ENCODE measurements at regions of chr9 and their contacts with region 1.

Region 1: DNA sequence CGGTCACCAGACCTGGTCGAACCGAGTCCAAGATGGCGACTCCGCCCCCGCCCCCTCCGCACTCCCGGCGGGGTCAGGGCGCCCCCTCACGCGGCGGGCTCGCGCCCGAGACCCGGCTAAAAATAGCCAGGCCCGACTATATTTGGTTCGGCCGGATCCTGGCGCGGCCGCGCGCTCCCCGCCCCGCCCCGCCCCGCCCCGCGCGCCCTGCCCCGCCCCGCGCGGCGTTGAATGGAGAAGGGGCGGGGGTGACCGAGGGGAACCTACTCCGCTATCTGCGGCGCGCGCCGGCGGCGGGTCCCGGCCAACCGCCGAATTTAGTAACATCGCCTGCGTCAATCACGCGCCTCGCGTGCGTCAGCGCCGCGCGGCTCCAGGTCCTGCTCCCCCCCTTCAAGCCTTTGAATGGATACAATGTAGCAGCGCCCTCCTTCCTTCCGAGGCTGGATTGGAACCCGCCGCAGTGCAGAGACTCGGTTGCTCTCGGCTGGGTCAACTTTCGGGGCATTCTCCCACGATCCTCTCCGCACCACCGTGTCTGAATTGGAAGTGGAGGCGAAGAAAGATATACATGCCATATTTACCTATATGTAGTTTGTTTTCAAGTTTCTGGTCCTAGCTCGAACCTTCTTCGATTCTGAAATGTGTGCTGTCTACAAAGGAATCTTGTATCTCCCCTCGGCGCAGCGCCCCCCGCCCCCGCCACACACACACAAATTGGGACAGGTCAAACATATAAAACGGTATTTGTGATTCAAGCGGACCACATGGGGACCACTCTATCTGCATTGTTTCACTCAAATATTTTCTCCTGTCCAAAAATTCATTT is 1.6 kb upstream of the NR4A3 start:
- DNase-seq: peak; percentile 81
- ATAC-seq: peak; percentile 52
- H3K4me3 ChIP-seq: peak overlapping the region; percentile 78 to 90 (median 89)
- H3K27ac ChIP-seq: peak overlapping the region; percentile 87
- H3K4me1 ChIP-seq: peaks cover 46% of the 10 kb centered on the region
- H3K27me3 ChIP-seq: peaks cover 4 to 28% of the 10 kb centered on the region in 2 experiments; a peak in 4 of 5 replicates
- CTCF ChIP-seq: peak; percentile 31
- EP300 ChIP-seq: no peak
- POLR2A ChIP-seq: no peak
- RAD21 ChIP-seq: no peak

Region 2: DNA sequence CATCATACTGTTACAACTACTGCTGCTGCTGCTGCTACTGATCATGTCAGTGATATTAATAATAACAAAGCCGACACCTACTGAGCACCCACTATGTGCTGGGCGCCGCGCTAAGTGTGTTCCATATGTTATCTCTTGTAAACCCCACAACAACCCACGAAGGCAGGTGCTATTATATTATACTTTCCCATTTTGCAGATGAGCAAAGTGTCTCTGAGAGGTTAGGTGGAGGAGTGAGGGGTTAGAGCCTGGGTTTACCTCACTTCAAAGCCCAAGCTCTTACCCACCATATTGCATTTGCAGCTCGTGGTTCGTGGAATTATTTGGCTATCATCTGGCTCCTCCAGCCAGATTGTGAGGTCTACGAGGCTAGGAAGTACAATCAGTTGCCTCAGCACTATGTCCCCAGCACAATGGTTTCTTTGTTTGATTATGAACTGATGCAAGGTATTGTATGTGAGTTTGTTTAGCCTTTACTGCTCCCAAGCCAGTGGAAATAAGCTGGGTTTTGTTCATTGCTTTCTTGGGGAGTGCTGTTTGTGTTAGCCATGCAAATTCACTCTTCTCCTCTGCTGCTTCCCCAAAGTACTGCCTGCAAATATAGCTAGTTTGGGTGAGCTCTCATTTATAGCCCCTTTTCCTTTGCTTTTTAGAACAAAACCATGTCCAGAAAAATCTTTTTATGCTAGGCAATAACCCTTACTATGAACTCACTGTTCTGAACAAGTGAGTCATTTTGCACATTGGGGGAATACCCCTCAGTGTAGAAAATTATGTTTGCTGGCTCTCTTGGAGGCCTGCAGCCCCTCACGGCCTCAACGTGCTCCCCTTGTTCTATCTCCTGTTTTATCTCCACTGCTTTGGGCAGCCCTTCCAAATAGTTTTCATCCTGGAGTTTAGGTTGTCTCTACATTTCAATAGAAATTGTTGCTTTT is 646.2 kb before region 1 on chr9:
- CTCF ChIA-PET with region 1: no interaction called
- POLR2A ChIA-PET with region 1: interaction called, 4 read pairs
- in situ Hi-C with region 1: no loop called
- intact Hi-C with region 1: loop called (anchors 5 kb)
- DNase-seq: peak; percentile 87
- ATAC-seq: peak; percentile 76
- H3K4me3 ChIP-seq: peak overlapping the region in 2 of 3 experiments; percentile 9 to 24; a peak in 2 of 6 replicates
- H3K27ac ChIP-seq: peak overlapping the region; percentile 22
- H3K4me1 ChIP-seq: peaks cover 85% of the 10 kb centered on the region
- H3K27me3 ChIP-seq: peaks cover 2 to 6% of the 10 kb centered on the region in 2 experiments; a peak in 2 of 5 replicates
- CTCF ChIP-seq: no peak
- EP300 ChIP-seq: 0 out of 4 replicates have a peak, but pooled peaks of 1 of the 2 experiments have one; percentile 31
- POLR2A ChIP-seq: no peak
- RAD21 ChIP-seq: no peak

Region 3: DNA sequence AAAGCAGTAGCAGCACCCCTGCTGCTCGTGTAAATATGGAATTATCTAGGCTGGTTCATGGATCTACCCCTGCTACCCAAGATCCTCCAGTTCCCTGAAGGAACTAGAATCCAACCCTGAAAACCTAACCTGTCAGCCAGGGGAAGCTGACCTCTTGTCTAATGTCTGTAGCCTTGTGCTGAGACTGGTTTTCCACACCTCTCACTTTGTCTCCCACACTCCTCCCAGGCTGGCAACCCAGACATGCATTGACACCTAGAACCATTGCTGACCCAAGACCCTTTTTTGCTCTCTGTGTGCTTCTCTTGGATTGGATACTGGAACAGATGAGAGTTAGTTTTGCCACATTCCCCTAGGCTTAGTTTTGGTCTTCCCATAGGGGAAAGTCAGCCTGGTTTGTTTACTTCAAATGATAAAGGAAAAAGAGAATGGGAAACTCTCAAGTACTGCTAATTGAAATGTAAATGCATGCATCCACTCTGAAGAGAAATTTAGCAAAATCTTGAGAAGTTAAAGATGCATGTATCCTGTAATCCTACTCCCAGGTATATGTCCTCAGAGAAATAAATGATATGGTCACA is 35.0 kb before region 1 on chr9:
- CTCF ChIA-PET with region 1: no interaction called
- POLR2A ChIA-PET with region 1: no interaction called
- in situ Hi-C with region 1: no loop called
- intact Hi-C with region 1: loop called (anchors 1 kb)
- DNase-seq: no peak
- ATAC-seq: no peak
- H3K4me3 ChIP-seq: no peak overlapping the region
- H3K27ac ChIP-seq: no peak overlapping the region
- H3K4me1 ChIP-seq: no peaks in the 10 kb centered on the region
- H3K27me3 ChIP-seq: no peaks in the 10 kb centered on the region
- CTCF ChIP-seq: no peak
- EP300 ChIP-seq: no peak
- POLR2A ChIP-seq: no peak
- RAD21 ChIP-seq: no peak

Region 4: DNA sequence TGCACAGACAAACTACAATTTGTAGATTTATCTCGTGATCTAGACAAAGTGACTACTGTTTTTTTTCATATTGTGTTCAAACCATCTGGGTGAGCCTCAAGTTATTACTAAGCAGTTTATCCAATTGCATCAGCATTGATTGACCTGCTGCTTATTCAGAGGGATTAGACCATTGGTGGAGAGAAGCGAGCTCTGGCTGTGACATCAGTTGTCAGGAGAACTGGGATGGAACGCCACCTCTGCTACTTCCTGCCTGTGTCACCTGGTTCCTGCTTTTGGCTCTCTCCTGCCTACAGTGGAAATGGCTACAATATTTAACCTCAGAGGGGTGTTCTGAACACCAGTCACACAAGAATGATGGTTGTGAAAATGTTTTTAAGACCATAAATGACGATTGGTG is 13.7 kb after region 1 on chr9:
- CTCF ChIA-PET with region 1: no interaction called
- POLR2A ChIA-PET with region 1: no interaction called
- in situ Hi-C with region 1: no loop called
- intact Hi-C with region 1: no loop called
- DNase-seq: no peak
- ATAC-seq: no peak
- H3K4me3 ChIP-seq: no peak overlapping the region
- H3K27ac ChIP-seq: no peak overlapping the region
- H3K4me1 ChIP-seq: no peaks in the 10 kb centered on the region
- H3K27me3 ChIP-seq: peaks cover 0 to 13% of the 10 kb centered on the region in 2 experiments; a peak in 1 of 5 replicates
- CTCF ChIP-seq: no peak
- EP300 ChIP-seq: no peak
- POLR2A ChIP-seq: no peak
- RAD21 ChIP-seq: no peak

Region 5: GRCh38 chr9:99906403-99907207 is 86.5 kb after region 1 on chr9 and contains the start of gene STX17:
- CTCF ChIA-PET with region 1: no interaction called
- POLR2A ChIA-PET with region 1: interaction called, 6 read pairs
- in situ Hi-C with region 1: loop called (anchors 5 kb)
- intact Hi-C with region 1: loop called (anchors 2 kb)
- DNase-seq: peak; percentile 61
- ATAC-seq: peak; percentile 92
- H3K4me3 ChIP-seq: peak within 1 kb of the TSS; percentile 80 to 96 (median 83)
- H3K27ac ChIP-seq: peak within 1 kb of the TSS; percentile 92
- H3K4me1 ChIP-seq: peaks cover 21% of the 10 kb centered on the region
- H3K27me3 ChIP-seq: no peaks in the 10 kb centered on the region; a peak in 1 of 5 replicates
- CTCF ChIP-seq: peak; percentile 22
- EP300 ChIP-seq: no peak
- POLR2A ChIP-seq: peak; percentile 75 to 80; a peak in 3 of 4 replicates
- RAD21 ChIP-seq: peak; percentile 10; the same call in 1 of the 2 replicates
- total RNA-seq, gene STX17: 25.7 and 28.9 TPM in 2 replicates

Region 6: DNA sequence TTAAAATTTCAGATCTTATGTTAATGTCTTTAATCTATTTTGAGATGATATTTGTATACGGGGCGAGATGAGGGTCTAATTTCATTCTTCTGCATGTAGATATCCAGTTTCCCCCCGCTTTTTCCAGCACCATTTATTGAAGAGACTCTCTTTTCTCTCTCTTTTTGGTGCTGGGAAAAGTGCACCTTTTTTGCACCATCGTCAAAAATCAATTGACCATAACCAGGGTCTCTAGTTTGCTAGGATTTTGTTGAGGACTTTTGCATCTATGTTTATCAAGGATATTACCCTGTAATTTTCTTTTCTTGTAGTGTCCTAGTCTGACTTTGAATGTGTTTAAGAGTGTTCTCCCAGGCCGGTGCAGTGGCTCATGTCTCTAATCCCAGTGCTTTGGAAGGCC is 179.7 kb after region 1 on chr9:
- CTCF ChIA-PET with region 1: no interaction called
- POLR2A ChIA-PET with region 1: no interaction called
- in situ Hi-C with region 1: loop called (anchors 10 kb)
- intact Hi-C with region 1: no loop called
- DNase-seq: no peak
- ATAC-seq: no peak
- H3K4me3 ChIP-seq: no peak overlapping the region
- H3K27ac ChIP-seq: no peak overlapping the region
- H3K4me1 ChIP-seq: no peaks in the 10 kb centered on the region
- H3K27me3 ChIP-seq: no peaks in the 10 kb centered on the region
- CTCF ChIP-seq: no peak
- EP300 ChIP-seq: no peak
- POLR2A ChIP-seq: no peak
- RAD21 ChIP-seq: no peak

Region 7: GRCh38 chr9:100098887-100099721 is 279.0 kb after region 1 on chr9 and contains the starts of genes ERP44 and INVS:
- CTCF ChIA-PET with region 1: no interaction called
- POLR2A ChIA-PET with region 1: no interaction called
- in situ Hi-C with region 1: no loop called
- intact Hi-C with region 1: loop called (anchors 1 kb)
- DNase-seq: peak; percentile 98
- ATAC-seq: peak; percentile 96
- H3K4me3 ChIP-seq: peak within 1 kb of the TSS; percentile 81 to 100 (median 99)
- H3K27ac ChIP-seq: peak within 1 kb of the TSS; percentile 90
- H3K4me1 ChIP-seq: peaks cover 31% of the 10 kb centered on the region
- H3K27me3 ChIP-seq: peaks cover 0 to 5% of the 10 kb centered on the region in 2 experiments; a peak in 1 of 5 replicates
- CTCF ChIP-seq: peak; percentile 19
- EP300 ChIP-seq: no peak
- POLR2A ChIP-seq: peak; percentile 83 to 89
- RAD21 ChIP-seq: 0 out of 2 replicates have a peak, but pooled peaks have one; percentile 20
- total RNA-seq, gene ERP44: 7.4 and 13.8 TPM in 2 replicates
- total RNA-seq, gene INVS: 16.3 and 17.1 TPM in 2 replicates

Measured in HepG2 (cell line).